GM13976 (cell line): ENCODE measurements at regions of chr5 and their contacts with region 1.

Region 1: GRCh38 chr5:102583276-102584124 is 84.7 kb upstream of the SLCO6A1 start:
- DNase-seq: no peak
- CTCF ChIP-seq: no peak

Region 2: DNA sequence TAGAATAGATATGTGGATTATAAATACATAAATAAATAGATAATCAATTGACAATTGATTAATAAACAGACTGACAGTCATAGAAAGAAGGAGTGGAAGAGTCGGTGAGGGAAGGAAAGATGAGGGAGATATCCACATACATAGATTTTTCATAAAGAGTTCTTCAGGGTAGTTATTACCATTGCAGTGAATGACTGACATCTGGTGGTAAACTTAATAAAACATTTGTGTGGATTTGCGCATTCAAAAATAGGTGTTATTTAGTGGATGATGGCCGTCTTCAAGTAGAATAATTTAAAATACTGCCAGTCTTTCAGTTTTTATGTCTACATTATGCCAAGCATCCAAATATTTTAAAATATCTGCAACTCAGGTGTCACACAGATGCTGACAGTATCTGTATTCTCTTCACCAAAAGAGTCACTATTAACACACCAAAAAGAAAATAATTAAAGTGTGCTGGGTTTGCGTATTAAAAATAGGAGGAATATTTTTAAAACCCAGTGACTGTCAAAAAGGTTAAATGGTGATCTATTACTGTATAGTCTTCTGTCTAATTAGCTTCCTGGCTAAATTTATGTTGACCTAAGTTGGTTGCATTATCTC is 457.7 kb after region 1 on chr5:
- in situ Hi-C with region 1: loop called (anchors 25 kb)
- DNase-seq: peak; percentile 41
- CTCF ChIP-seq: peak; percentile 31

Region 3: GRCh38 chr5:103139264-103139865 is 555.9 kb after region 1 on chr5:
- in situ Hi-C with region 1: loop called (anchors 25 kb)
- DNase-seq: peak; percentile 81
- CTCF ChIP-seq: peak; percentile 88

Region 4: DNA sequence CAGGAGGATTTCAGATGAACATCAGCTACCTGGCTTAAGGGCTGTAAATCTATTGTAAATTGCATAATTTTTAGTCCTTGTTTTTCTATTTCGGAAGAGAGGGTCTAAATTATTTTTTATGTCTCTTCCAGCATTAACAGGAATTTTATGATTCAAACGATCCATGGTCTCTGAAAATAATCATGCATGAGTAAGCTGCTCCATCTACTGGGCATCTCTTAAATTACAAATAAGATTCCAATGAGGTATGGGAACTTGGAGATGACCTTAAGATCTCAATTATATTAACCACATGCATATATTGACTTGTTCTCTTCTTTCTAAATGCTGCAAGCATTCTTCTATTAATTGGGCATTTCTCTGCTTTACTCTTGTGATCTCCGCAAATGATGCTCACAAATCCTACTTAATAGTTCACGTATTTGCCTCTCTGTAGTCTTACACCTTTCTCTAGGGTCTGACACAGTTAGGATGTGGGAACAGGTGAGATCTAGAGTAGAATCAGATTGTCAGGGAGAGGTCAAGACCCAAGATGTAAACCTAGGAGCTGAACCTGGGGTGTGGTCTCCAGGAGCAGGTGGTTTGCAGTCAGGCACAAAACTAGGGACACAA is 892.2 kb after region 1 on chr5:
- in situ Hi-C with region 1: loop called (anchors 25 kb)
- DNase-seq: peak; percentile 7
- CTCF ChIP-seq: no peak